Caco-2 (cell line): ENCODE measurements at regions of chr2 and their contacts with region 1.

Region 1: GRCh38 chr2:27050281-27050995 is 1.0 kb upstream of the AGBL5 start:
- DNase-seq: peak; percentile 92 to 95
- H3K4me3 ChIP-seq: peak overlapping the region; percentile 96
- H3K4me3 Mint-ChIP-seq: peak overlapping the region; percentile 80
- H3K27ac Mint-ChIP-seq: peak overlapping the region; percentile 100
- H3K4me1 ChIP-seq: 0 out of 2 replicates have a peak, but pooled peaks cover 6% of the 10 kb centered on the region
- H3K4me1 Mint-ChIP-seq: peaks cover 31% of the 10 kb centered on the region
- H3K27me3 ChIP-seq: no peaks in the 10 kb centered on the region
- H3K27me3 Mint-ChIP-seq: peaks cover 10% of the 10 kb centered on the region
- CTCF ChIP-seq: peak; percentile 37 to 49

Region 2: GRCh38 chr2:27032495-27033252 is 17.8 kb before region 1 on chr2 and contains the start of gene TMEM214:
- CTCF ChIA-PET with region 1: no interaction called
- POLR2A ChIA-PET with region 1: interaction called, 9 read pairs
- intact Hi-C with region 1: loop called (anchors 1 kb)
- DNase-seq: peak; percentile 90 to 93
- H3K4me3 ChIP-seq: peak within 1 kb of the TSS; percentile 92
- H3K4me3 Mint-ChIP-seq: peak within 1 kb of the TSS; percentile 98
- H3K27ac Mint-ChIP-seq: peak within 1 kb of the TSS; percentile 91
- H3K4me1 ChIP-seq: peaks cover 17% of the 10 kb centered on the region
- H3K4me1 Mint-ChIP-seq: peaks cover 7% of the 10 kb centered on the region
- H3K27me3 ChIP-seq: no peaks in the 10 kb centered on the region
- H3K27me3 Mint-ChIP-seq: no peaks in the 10 kb centered on the region
- CTCF ChIP-seq: peak in 1 of 2 experiments; percentile 29
- total RNA-seq, gene TMEM214: 85.0 and 85.4 TPM in 2 replicates

Region 3: GRCh38 chr2:27071277-27071989 is 21.0 kb after region 1 on chr2 and contains the start of gene OST4:
- CTCF ChIA-PET with region 1: interaction called, 10 read pairs
- POLR2A ChIA-PET with region 1: interaction called, 27 read pairs
- intact Hi-C with region 1: loop called (anchors 1 kb)
- DNase-seq: peak; percentile 91 to 97
- H3K4me3 ChIP-seq: peak within 1 kb of the TSS; percentile 90
- H3K4me3 Mint-ChIP-seq: peak within 1 kb of the TSS; percentile 95
- H3K27ac Mint-ChIP-seq: peak within 1 kb of the TSS; percentile 92
- H3K4me1 ChIP-seq: no peaks in the 10 kb centered on the region
- H3K4me1 Mint-ChIP-seq: peaks cover 9% of the 10 kb centered on the region
- H3K27me3 ChIP-seq: no peaks in the 10 kb centered on the region
- H3K27me3 Mint-ChIP-seq: peaks cover 10% of the 10 kb centered on the region
- CTCF ChIP-seq: no peak
- total RNA-seq, gene OST4: 237 and 249 TPM in 2 replicates

Region 4: DNA sequence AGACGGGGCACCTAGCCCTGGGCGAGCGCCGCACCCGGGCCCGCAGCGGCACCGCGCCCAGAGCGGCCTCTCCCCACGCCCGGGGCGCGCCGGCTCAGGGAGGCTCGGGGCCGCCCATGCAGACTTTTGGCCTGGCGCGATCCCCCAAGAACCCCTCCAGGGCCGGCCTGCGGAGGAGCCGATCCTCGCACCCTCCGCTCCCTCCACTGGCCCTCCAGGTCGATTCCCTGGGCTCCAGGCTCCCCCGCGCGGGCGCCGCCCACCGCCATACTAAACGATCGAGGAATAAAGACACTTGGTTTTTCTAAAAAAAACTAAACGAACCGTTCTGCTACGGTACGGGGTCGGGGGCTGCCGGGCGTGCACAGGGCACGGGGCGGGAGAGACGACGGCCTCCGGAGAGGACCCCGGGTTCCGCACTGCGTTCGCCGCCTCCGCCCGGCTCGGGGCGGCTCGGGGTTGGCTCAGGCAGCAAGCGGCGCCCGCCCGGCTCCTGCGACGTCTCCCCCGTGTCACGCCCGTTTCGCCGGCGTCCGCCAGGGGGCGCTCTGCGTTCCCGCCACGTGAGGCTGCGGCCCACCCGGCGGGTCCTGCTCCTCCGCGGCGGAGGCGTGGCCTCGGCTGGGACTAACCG is 35.8 kb after region 1 on chr2:
- CTCF ChIA-PET with region 1: interaction called, 11 read pairs
- POLR2A ChIA-PET with region 1: no interaction called
- intact Hi-C with region 1: loop called (anchors 1 kb)
- DNase-seq: peak; percentile 94 to 99
- H3K4me3 ChIP-seq: peak overlapping the region; percentile 86
- H3K4me3 Mint-ChIP-seq: peak overlapping the region; percentile 89
- H3K27ac Mint-ChIP-seq: peak overlapping the region; percentile 66
- H3K4me1 ChIP-seq: peaks cover 7% of the 10 kb centered on the region
- H3K4me1 Mint-ChIP-seq: peaks cover 14% of the 10 kb centered on the region
- H3K27me3 ChIP-seq: no peaks in the 10 kb centered on the region
- H3K27me3 Mint-ChIP-seq: no peaks in the 10 kb centered on the region
- CTCF ChIP-seq: peak; percentile 74 to 88